Calu3 (cell line): ENCODE measurements at regions of chr7 and their contacts with region 1.

Region 1: GRCh38 chr7:37476881-37477450 is 28.3 kb upstream of the ELMO1 start:
- DNase-seq: no peak
- H3K4me3 Mint-ChIP-seq: no peak overlapping the region
- H3K27ac Mint-ChIP-seq: no peak overlapping the region
- H3K4me1 Mint-ChIP-seq: no peaks in the 10 kb centered on the region
- H3K27me3 Mint-ChIP-seq: no peaks in the 10 kb centered on the region
- CTCF ChIP-seq: no peak

Region 2: GRCh38 chr7:37018954-37019353 is 458.0 kb before region 1 on chr7:
- CTCF ChIA-PET with region 1: no interaction called
- intact Hi-C with region 1: no loop called
- DNase-seq: no peak
- H3K4me3 Mint-ChIP-seq: no peak overlapping the region
- H3K27ac Mint-ChIP-seq: no peak overlapping the region
- H3K4me1 Mint-ChIP-seq: peaks cover 9% of the 10 kb centered on the region
- H3K27me3 Mint-ChIP-seq: no peaks in the 10 kb centered on the region
- CTCF ChIP-seq: no peak

Region 3: DNA sequence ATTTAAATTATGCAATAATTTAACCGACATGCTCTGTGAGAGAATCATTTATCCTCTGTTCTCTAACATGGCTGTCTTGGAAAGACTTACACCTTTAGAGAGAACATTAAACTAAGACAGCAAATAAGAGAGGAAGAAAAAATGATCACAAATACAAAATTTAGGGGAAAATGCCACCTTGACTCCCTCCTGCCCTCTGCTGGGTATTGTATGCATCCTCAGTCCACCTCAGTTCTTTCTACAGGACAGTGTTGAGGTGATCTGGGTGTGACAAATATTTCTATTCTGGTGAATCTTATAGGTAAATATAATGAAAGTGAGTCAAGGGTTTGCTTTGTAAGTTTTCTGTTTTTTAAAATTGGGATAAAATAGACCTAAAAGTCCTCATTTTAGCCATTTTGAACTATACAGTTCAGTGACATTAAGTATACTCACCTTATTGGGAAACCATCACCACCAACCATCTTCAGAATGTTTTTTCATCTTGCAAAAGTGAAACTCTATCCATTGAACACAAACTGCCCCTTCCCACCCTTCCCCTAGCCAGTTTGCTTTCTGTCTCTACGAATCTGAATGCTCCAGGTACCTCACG is 33.2 kb after region 1 on chr7:
- CTCF ChIA-PET with region 1: no interaction called
- intact Hi-C with region 1: no loop called
- DNase-seq: peak; percentile 27
- H3K4me3 Mint-ChIP-seq: no peak overlapping the region
- H3K27ac Mint-ChIP-seq: no peak overlapping the region
- H3K4me1 Mint-ChIP-seq: no peaks in the 10 kb centered on the region
- H3K27me3 Mint-ChIP-seq: peaks cover 11% of the 10 kb centered on the region
- CTCF ChIP-seq: peak; percentile 61

Region 4: GRCh38 chr7:38432080-38432479 is 955.1 kb after region 1 on chr7:
- CTCF ChIA-PET with region 1: interaction called, 11 read pairs
- intact Hi-C with region 1: no loop called
- DNase-seq: no peak
- H3K4me3 Mint-ChIP-seq: no peak overlapping the region
- H3K27ac Mint-ChIP-seq: no peak overlapping the region
- H3K4me1 Mint-ChIP-seq: no peaks in the 10 kb centered on the region
- H3K27me3 Mint-ChIP-seq: peaks cover 51% of the 10 kb centered on the region
- CTCF ChIP-seq: no peak